ENCODE measurements at regions of chr3 and their contacts with region 1.

Region 1: GRCh38 chr3:129305592-129306091 is 27.0 kb downstream of the HMCES start:
- DNase-seq: no peak
- ATAC-seq: no peak
- H3K4me3 ChIP-seq: no peak overlapping the region
- H3K4me3 Mint-ChIP-seq: no peak overlapping the region
- H3K27ac ChIP-seq: no peak overlapping the region
- H3K27ac Mint-ChIP-seq: no peak overlapping the region
- H3K4me1 ChIP-seq: no peaks in the 10 kb centered on the region
- H3K4me1 Mint-ChIP-seq: peaks cover 14% of the 10 kb centered on the region
- H3K27me3 ChIP-seq: no peaks in the 10 kb centered on the region
- H3K27me3 Mint-ChIP-seq: no peaks in the 10 kb centered on the region
- CTCF ChIP-seq: no peak

Region 2: DNA sequence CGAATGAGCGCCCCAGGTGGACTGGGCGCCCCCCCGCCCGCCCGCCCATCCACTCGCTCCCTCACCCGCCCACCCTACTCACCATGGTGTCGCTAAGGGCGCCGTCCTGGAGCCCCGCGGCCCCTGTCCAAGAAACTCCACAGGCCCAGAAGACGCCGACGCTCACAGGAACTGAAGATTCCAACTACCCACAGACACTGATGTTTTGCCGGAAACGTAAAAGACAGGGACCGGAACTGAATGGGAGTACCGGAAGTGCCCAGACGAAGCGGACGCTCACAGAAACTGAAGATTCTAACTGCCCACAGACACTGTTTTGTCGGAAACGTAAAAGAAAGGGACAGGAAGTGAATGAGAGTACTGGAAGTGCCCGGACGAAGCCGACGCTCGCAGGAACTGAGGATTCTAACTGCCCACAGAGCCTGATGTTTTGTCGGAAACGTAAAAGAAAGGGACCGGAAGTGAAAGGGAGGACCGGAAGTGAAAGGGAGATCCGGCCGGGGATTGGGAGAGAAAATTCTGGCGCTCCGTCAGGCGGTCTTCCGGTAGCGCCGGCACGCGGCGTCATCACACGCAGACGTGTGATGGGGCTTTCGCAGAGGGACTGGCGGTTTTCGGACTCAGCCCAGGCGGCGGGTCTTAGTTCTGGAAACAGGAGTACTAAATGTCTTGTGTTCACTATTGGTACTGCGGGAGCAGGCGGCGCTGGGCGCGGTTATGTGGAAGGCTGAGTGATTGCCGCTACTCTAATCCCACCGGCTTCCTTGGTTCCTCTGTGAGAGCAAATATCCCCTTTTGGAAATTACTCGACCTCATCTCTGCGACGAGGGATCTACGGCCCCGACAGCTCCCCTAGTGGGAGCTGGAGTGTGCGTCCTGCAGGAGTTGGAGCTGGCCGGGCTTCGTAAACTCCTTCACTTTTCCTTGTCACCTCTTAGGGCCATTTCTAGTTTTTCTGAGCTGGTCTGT is 144.5 kb before region 1 on chr3 and contains the start of gene ISY1:
- CTCF ChIA-PET with region 1: no interaction called
- POLR2A ChIA-PET with region 1: interaction called, 10 read pairs
- intact Hi-C with region 1: no loop called
- DNase-seq: peak; percentile 71 to 97 (median 86)
- ATAC-seq: peak; percentile 80
- H3K4me3 ChIP-seq: peak within 1 kb of the TSS; percentile 84 to 94
- H3K4me3 Mint-ChIP-seq: peak within 1 kb of the TSS; percentile 95
- H3K27ac ChIP-seq: peak within 1 kb of the TSS; percentile 92 to 99
- H3K27ac Mint-ChIP-seq: peak within 1 kb of the TSS; percentile 96
- H3K4me1 ChIP-seq: peaks cover 18% of the 10 kb centered on the region
- H3K4me1 Mint-ChIP-seq: peaks cover 43% of the 10 kb centered on the region
- H3K27me3 ChIP-seq: no peaks in the 10 kb centered on the region
- H3K27me3 Mint-ChIP-seq: no peaks in the 10 kb centered on the region
- CTCF ChIP-seq: peak; percentile 70
- total RNA-seq, gene ISY1: 35.2 to 38.7 TPM

Region 3: DNA sequence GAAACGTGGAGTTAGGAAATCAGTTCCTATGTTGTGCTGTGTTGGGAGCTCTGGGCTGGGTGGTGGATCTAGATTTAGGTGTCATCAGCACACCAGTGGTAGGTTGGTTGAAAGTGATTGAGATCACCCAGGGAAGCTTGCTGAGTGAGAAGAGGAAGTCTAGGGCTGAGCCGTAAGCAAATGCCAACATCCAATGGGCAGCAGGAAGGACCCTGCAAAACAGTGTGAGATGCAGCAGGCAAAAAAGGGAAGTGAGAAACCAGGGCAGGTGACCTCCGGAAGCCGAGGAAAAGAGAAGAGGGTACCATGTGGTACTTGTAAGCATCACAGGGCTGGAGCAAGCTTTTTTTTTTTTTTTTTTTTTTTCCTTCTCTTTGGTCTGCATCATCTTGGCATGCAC is 72.1 kb before region 1 on chr3:
- CTCF ChIA-PET with region 1: no interaction called
- POLR2A ChIA-PET with region 1: no interaction called
- intact Hi-C with region 1: no loop called
- DNase-seq: peak in 1 of 9 experiments; percentile 53
- ATAC-seq: peak; percentile 40
- H3K4me3 ChIP-seq: no peak overlapping the region
- H3K4me3 Mint-ChIP-seq: no peak overlapping the region
- H3K27ac ChIP-seq: no peak overlapping the region
- H3K27ac Mint-ChIP-seq: peak overlapping the region; percentile 5
- H3K4me1 ChIP-seq: no peaks in the 10 kb centered on the region
- H3K4me1 Mint-ChIP-seq: peaks cover 5% of the 10 kb centered on the region
- H3K27me3 ChIP-seq: peaks cover 0 to 3% of the 10 kb centered on the region in 2 experiments
- H3K27me3 Mint-ChIP-seq: peaks cover 2% of the 10 kb centered on the region
- CTCF ChIP-seq: no peak

Region 4: GRCh38 chr3:129323651-129324294 is 18.1 kb after region 1 on chr3:
- CTCF ChIA-PET with region 1: no interaction called
- POLR2A ChIA-PET with region 1: no interaction called
- intact Hi-C with region 1: no loop called
- DNase-seq: no peak
- ATAC-seq: no peak
- H3K4me3 ChIP-seq: no peak overlapping the region
- H3K4me3 Mint-ChIP-seq: no peak overlapping the region
- H3K27ac ChIP-seq: no peak overlapping the region
- H3K27ac Mint-ChIP-seq: no peak overlapping the region
- H3K4me1 ChIP-seq: no peaks in the 10 kb centered on the region
- H3K4me1 Mint-ChIP-seq: no peaks in the 10 kb centered on the region
- H3K27me3 ChIP-seq: no peaks in the 10 kb centered on the region
- H3K27me3 Mint-ChIP-seq: no peaks in the 10 kb centered on the region
- CTCF ChIP-seq: no peak

Measured in CD8-positive, alpha-beta T cell (primary cell).